Activated CD4-positive, alpha-beta memory T cell treated with anti-CD3 and anti-CD28 coated beads for 36 hours (primary cell): ENCODE measurements at regions of chr1 and their contacts with region 1.

Region 1: DNA sequence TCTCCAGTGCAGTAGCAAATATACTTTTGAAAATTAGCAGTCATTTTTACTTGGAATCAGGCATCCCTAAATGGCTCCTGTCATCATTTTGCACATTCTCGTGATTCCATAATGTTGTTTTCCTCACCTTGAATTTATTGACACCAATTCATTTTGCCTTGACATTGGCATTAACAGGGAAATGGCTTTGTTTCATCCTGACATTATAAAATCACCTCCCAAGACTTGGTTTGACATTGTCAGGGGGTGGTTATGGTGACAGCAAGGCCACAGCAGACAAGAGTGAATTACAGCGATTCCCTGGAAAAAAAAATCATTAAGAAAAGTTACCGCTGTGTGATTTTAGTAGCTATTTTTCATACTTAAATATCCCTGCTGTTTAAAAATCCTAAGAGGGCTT is 327.0 kb downstream of the NTNG1 start:
- DNase-seq: no peak
- H3K4me3 Mint-ChIP-seq: no peak overlapping the region
- H3K27ac Mint-ChIP-seq: no peak overlapping the region
- H3K4me1 Mint-ChIP-seq: no peaks in the 10 kb centered on the region
- H3K27me3 Mint-ChIP-seq: peaks cover 7% of the 10 kb centered on the region

Region 2: GRCh38 chr1:107434361-107434693 is 33.5 kb before region 1 on chr1:
- CTCF ChIA-PET with region 1: no interaction called
- POLR2A ChIA-PET with region 1: no interaction called
- intact Hi-C with region 1: no loop called
- DNase-seq: no peak
- H3K4me3 Mint-ChIP-seq: no peak overlapping the region
- H3K27ac Mint-ChIP-seq: no peak overlapping the region
- H3K4me1 Mint-ChIP-seq: no peaks in the 10 kb centered on the region
- H3K27me3 Mint-ChIP-seq: peaks cover 5% of the 10 kb centered on the region

Region 3: GRCh38 chr1:107450899-107451664 is 16.7 kb before region 1 on chr1:
- CTCF ChIA-PET with region 1: no interaction called
- POLR2A ChIA-PET with region 1: no interaction called
- intact Hi-C with region 1: no loop called
- DNase-seq: no peak
- H3K4me3 Mint-ChIP-seq: no peak overlapping the region
- H3K27ac Mint-ChIP-seq: no peak overlapping the region
- H3K4me1 Mint-ChIP-seq: no peaks in the 10 kb centered on the region
- H3K27me3 Mint-ChIP-seq: no peaks in the 10 kb centered on the region

Region 4: DNA sequence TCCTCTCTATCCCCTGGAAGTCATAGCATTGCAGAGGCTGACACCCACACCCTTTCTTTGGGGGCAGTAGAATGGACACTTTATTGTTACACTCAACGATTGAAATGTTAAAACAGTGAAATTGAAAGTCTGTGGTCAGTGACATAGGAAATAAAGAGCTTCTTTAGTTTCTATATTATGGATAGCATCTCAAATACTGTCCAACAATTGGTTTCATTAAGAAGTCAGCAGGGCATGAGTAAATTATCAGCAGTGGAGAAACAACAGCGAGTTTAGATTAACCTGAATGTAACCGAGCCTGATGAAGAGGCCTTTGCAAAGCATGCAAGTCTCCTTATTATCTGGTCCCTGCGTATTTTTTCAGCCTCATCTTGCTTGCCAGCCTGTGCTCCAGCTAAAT is 23.8 kb after region 1 on chr1:
- CTCF ChIA-PET with region 1: no interaction called
- POLR2A ChIA-PET with region 1: no interaction called
- intact Hi-C with region 1: loop called (anchors 1 kb)
- DNase-seq: no peak
- H3K4me3 Mint-ChIP-seq: no peak overlapping the region
- H3K27ac Mint-ChIP-seq: no peak overlapping the region
- H3K4me1 Mint-ChIP-seq: no peaks in the 10 kb centered on the region
- H3K27me3 Mint-ChIP-seq: peaks cover 5% of the 10 kb centered on the region